A549 (cell line): ENCODE measurements at regions of chr5 and their contacts with region 1.

Region 1: GRCh38 chr5:69334793-69335268 is 2.2 kb upstream of the CCDC125 start:
- DNase-seq: peak; percentile 75 to 85
- ATAC-seq: peak; percentile 93 to 94
- H3K4me3 ChIP-seq: no peak overlapping the region
- H3K27ac ChIP-seq: no peak overlapping the region
- H3K4me1 ChIP-seq: peaks cover 12% of the 10 kb centered on the region; the same call in 2 of the 3 replicates
- CTCF ChIP-seq: peak; percentile 69
- EP300 ChIP-seq: no peak
- POLR2A ChIP-seq: no peak
- RAD21 ChIP-seq: peak; percentile 71 to 76

Region 2: GRCh38 chr5:69129413-69129812 is 205.4 kb before region 1 on chr5:
- CTCF ChIA-PET with region 1: no interaction called
- POLR2A ChIA-PET with region 1: no interaction called
- DNase-seq: peak; percentile 55 to 63
- ATAC-seq: peak; percentile 77 to 85
- H3K4me3 ChIP-seq: no peak overlapping the region; the same call in 2 of the 3 replicates
- H3K27ac ChIP-seq: peak overlapping the region; percentile 61 to 72
- H3K4me1 ChIP-seq: peaks cover 27% of the 10 kb centered on the region
- CTCF ChIP-seq: no peak
- EP300 ChIP-seq: no peak
- POLR2A ChIP-seq: no peak
- RAD21 ChIP-seq: no peak

Region 3: DNA sequence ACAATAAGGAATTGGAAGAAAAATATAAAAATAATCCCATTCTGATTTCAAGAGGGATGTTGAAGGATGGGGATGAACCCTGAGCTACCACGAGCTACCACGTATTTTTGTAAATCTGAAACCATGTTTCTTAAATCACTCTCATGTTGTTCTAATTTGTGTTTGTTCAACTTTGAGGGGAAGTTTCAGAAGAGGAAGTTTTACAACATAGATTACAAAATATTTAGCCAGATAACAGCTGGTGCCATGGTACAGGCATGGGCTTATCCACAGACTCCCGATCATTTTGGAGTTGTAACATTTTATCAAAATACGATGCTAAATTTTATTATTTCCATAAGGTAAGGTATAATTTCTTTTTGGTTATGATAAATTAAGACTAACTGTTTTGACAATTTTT is 17.4 kb before region 1 on chr5:
- CTCF ChIA-PET with region 1: interaction called, 13 read pairs
- POLR2A ChIA-PET with region 1: no interaction called
- DNase-seq: no peak
- ATAC-seq: no peak
- H3K4me3 ChIP-seq: no peak overlapping the region
- H3K27ac ChIP-seq: no peak overlapping the region
- H3K4me1 ChIP-seq: no peaks in the 10 kb centered on the region
- CTCF ChIP-seq: no peak
- EP300 ChIP-seq: no peak
- POLR2A ChIP-seq: no peak
- RAD21 ChIP-seq: no peak

Region 4: DNA sequence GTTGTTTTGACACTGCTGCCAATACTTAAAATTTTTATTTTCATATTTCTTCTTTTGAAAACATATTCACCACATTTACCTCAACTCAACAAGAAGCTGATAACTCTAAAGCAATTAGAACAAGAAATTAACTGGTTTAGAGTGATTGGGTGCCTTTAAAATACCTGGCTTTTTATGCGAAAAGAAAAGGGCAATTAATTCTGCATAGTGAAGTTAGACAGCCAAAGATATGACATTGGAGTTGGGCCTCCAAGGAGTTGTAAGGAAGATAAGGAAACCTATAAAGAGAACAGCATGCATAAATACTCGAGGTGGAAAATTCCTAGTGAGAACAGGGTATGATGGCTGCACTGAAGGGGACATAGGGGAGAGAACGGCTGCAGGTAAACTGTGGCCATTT is 24.9 kb after region 1 on chr5:
- CTCF ChIA-PET with region 1: interaction called, 13 read pairs
- POLR2A ChIA-PET with region 1: no interaction called
- DNase-seq: no peak
- ATAC-seq: no peak
- H3K4me3 ChIP-seq: no peak overlapping the region
- H3K27ac ChIP-seq: no peak overlapping the region
- H3K4me1 ChIP-seq: no peaks in the 10 kb centered on the region
- CTCF ChIP-seq: no peak
- EP300 ChIP-seq: no peak
- POLR2A ChIP-seq: no peak
- RAD21 ChIP-seq: no peak